ENCODE measurements at regions of chr1 and their contacts with region 1.

Region 1: GRCh38 chr1:177181631-177182291 is 11.0 kb downstream of the BRINP2 start:
- DNase-seq: peak; percentile 66 to 81
- H3K4me3 ChIP-seq: no peak overlapping the region
- H3K4me3 Mint-ChIP-seq: peak overlapping the region; percentile 55
- H3K27ac Mint-ChIP-seq: no peak overlapping the region
- H3K4me1 ChIP-seq: no peaks in the 10 kb centered on the region
- H3K4me1 Mint-ChIP-seq: peaks cover 8% of the 10 kb centered on the region
- H3K27me3 ChIP-seq: no peaks in the 10 kb centered on the region; the same call in 1 of the 2 replicates
- H3K27me3 Mint-ChIP-seq: peaks cover 15% of the 10 kb centered on the region
- CTCF ChIP-seq: peak; percentile 79 to 85

Region 2: GRCh38 chr1:176949033-176949662 is 232.6 kb before region 1 on chr1:
- CTCF ChIA-PET with region 1: interaction called, 6 read pairs
- POLR2A ChIA-PET with region 1: no interaction called
- intact Hi-C with region 1: loop called (anchors 1 kb)
- DNase-seq: peak; percentile 76 to 79
- H3K4me3 ChIP-seq: no peak overlapping the region
- H3K4me3 Mint-ChIP-seq: no peak overlapping the region
- H3K27ac Mint-ChIP-seq: no peak overlapping the region
- H3K4me1 ChIP-seq: no peaks in the 10 kb centered on the region
- H3K4me1 Mint-ChIP-seq: no peaks in the 10 kb centered on the region
- H3K27me3 ChIP-seq: no peaks in the 10 kb centered on the region
- H3K27me3 Mint-ChIP-seq: peaks cover 6% of the 10 kb centered on the region
- CTCF ChIP-seq: peak; percentile 68 to 83

Region 3: GRCh38 chr1:177032434-177032833 is 149.3 kb before region 1 on chr1:
- CTCF ChIA-PET with region 1: no interaction called
- POLR2A ChIA-PET with region 1: no interaction called
- intact Hi-C with region 1: loop called (anchors 10 kb)
- DNase-seq: no peak
- H3K4me3 ChIP-seq: no peak overlapping the region
- H3K4me3 Mint-ChIP-seq: no peak overlapping the region
- H3K27ac Mint-ChIP-seq: no peak overlapping the region
- H3K4me1 ChIP-seq: no peaks in the 10 kb centered on the region
- H3K4me1 Mint-ChIP-seq: no peaks in the 10 kb centered on the region
- H3K27me3 ChIP-seq: no peaks in the 10 kb centered on the region
- H3K27me3 Mint-ChIP-seq: peaks cover 11% of the 10 kb centered on the region
- CTCF ChIP-seq: no peak

Region 4: GRCh38 chr1:177355595-177355994 is 173.8 kb after region 1 on chr1:
- CTCF ChIA-PET with region 1: no interaction called
- POLR2A ChIA-PET with region 1: no interaction called
- intact Hi-C with region 1: no loop called
- DNase-seq: peak in 1 of 2 experiments; percentile 38
- H3K4me3 ChIP-seq: no peak overlapping the region
- H3K4me3 Mint-ChIP-seq: no peak overlapping the region
- H3K27ac Mint-ChIP-seq: no peak overlapping the region
- H3K4me1 ChIP-seq: no peaks in the 10 kb centered on the region
- H3K4me1 Mint-ChIP-seq: no peaks in the 10 kb centered on the region
- H3K27me3 ChIP-seq: no peaks in the 10 kb centered on the region
- H3K27me3 Mint-ChIP-seq: peaks cover 7% of the 10 kb centered on the region
- CTCF ChIP-seq: peak; percentile 14 to 64